T-cell (primary cell): ENCODE measurements at regions of chr11 and their contacts with region 1.

Region 1: DNA sequence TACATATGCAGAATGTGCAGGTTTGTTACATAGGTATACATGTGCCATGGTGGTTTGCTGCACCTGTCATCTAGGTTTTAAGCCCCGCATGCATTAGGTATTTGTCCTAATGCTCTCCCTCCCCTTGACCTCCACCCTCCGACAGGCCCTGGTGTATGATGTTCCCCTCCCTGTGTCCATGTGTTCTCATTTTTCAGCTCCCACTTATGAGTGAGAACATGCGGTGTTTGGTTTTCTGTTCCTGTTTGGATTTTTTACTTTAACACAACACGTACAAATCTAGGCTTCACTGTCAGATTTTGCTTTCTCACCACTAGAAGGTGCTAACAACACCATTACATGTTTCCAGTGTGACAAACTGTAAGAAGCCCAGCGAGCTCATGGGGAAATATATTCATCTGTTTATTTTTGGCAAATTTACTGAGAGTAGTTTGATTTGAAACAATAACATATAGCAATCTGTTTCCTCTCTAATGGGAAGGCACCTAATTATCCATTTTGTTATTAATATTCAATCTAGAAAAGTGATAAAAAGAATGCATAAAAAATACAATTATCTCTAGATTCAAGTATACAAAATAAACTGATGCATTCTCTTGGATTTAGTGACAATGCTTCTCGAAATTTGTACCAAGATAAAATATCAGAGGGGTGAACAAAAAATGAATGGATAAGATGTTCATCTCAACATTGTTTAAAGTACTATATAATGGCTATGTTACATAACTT is 23.2 kb upstream of the BIRC3 start:
- DNase-seq: peak in 9 of 35 experiments; percentile 11 to 82 (median 30)
- ATAC-seq: peak; percentile 86 to 97 (median 92)
- H3K4me3 ChIP-seq: peak overlapping the region in 1 of 2 donors; percentile 35
- H3K4me3 Mint-ChIP-seq: peak overlapping the region; percentile 74 to 90 (median 88)
- H3K27ac ChIP-seq: peak overlapping the region; percentile 37
- H3K27ac Mint-ChIP-seq: peak overlapping the region; percentile 96
- H3K4me1 ChIP-seq: peaks cover 7 to 11% of the 10 kb centered on the region in 2 experiments
- H3K4me1 Mint-ChIP-seq: peaks cover 32 to 53% (median 34%) of the 10 kb centered on the region in 3 donors
- H3K27me3 ChIP-seq: no peaks in the 10 kb centered on the region
- H3K27me3 Mint-ChIP-seq: no peaks in the 10 kb centered on the region

Region 2: DNA sequence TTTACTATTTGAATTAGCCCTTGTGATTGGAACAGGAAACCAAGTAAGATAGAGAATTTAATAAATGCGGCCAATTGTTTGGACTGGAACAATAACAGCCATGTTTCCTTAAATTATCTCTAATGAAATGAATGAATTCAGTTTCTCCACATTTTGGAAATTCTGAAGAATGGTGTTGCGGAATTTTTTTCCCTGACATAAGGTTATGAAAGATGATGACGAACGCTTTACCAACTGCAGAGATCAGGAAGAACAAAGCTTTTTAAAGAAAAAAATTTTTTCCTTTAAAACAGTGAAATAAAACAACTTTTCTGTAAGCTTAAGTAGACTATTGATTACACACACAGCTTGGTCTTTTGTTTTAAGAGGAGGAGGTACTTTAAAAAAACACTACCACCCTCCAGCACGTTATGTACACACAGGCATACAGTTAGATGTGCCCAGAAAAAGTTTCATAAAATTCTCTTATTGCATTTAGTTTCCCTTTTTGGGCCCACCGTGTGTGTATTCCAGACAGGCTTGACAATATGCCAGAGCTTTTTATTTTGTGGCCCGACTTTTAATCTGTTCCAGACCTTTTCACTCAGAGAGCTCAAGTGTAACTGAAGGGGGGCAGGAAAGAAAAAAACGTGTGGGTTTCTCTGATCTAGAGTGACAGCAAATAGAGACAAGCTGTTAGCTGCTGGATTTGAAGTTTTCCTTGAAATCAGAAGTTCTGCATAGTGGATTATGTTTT is 106.5 kb before region 1 on chr11:
- CTCF ChIA-PET with region 1: no interaction called
- POLR2A ChIA-PET with region 1: no interaction called
- DNase-seq: no peak
- ATAC-seq: no peak
- H3K4me3 ChIP-seq: no peak overlapping the region
- H3K4me3 Mint-ChIP-seq: no peak overlapping the region
- H3K27ac ChIP-seq: no peak overlapping the region
- H3K27ac Mint-ChIP-seq: no peak overlapping the region
- H3K4me1 ChIP-seq: no peaks in the 10 kb centered on the region
- H3K4me1 Mint-ChIP-seq: no peaks in the 10 kb centered on the region
- H3K27me3 ChIP-seq: peaks cover 0 to 3% of the 10 kb centered on the region in 2 experiments
- H3K27me3 Mint-ChIP-seq: peaks cover 10 to 26% of the 10 kb centered on the region in 2 donors

Region 3: DNA sequence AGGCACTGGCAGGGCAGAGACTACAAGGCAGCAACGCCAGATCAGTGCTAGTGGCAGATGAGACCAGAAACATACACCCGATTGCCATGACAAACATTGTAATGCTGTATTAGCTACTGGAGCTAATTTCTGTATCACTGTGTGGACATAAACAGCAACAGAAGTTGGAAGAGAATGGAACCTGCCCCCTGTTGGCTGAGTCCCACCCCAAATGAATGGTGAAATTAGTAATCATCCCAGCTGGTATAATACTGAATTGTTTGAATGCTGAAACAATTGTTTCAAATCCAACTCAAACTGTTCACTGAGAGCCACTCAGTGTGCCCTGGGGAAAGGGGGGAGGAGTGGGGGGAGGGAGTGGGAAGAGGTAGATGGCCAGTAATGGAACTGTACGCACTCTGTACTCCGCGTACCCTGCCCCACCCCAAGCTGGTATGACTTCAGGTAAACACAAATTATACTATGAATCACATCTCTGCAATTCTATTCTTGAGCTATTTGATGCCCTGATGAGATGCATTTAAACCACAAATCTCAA is 12.1 kb after region 1 on chr11:
- CTCF ChIA-PET with region 1: interaction called, 5 to 53 read pairs
- POLR2A ChIA-PET with region 1: interaction called, 4 to 7 read pairs
- DNase-seq: peak in 3 of 35 experiments; percentile 22 to 64 (median 49)
- ATAC-seq: peak; percentile 44 to 66 (median 60)
- H3K4me3 ChIP-seq: no peak overlapping the region
- H3K4me3 Mint-ChIP-seq: peak overlapping the region; percentile 37 to 60 (median 49)
- H3K27ac ChIP-seq: peak overlapping the region; percentile 90
- H3K27ac Mint-ChIP-seq: peak overlapping the region; percentile 95 to 97
- H3K4me1 ChIP-seq: peaks cover 30 to 41% of the 10 kb centered on the region in 2 experiments
- H3K4me1 Mint-ChIP-seq: peaks cover 61 to 78% (median 66%) of the 10 kb centered on the region in 3 donors
- H3K27me3 ChIP-seq: no peaks in the 10 kb centered on the region
- H3K27me3 Mint-ChIP-seq: no peaks in the 10 kb centered on the region

Region 4: DNA sequence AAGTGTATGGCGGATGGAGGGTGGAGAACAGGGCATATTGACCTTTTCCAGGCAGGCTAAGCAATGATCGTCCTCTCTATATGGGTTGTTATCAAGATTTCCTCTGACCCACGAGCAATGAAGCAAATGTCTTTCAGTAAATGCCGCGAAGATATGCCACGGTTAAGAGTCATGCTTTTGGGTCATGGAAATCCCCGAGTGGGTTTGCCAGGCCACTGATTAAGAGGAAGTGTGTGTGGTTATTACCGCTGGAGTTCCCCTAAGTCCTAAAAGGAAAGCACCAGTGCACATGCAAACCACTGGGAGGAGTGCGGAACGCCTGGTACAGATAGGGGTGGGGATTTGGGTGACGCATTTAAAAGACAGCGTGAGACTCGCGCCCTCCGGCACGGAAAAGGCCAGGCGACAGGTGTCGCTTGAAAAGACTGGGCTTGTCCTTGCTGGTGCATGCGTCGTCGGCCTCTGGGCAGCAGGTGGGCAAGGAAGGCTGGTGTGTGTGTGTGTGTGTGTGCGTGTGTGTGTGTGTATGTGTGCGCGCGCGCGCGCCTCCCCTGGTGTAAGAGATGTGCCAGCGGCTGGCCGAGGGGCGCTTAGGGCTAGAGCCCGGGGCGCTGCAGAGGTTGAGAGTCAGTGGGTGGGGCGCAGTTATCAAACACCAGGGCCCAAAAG is 23.2 kb after region 1 on chr11 and contains the start of gene BIRC3:
- CTCF ChIA-PET with region 1: interaction called, 26 to 66 read pairs
- POLR2A ChIA-PET with region 1: interaction called, 5 to 11 read pairs
- DNase-seq: peak; percentile 70 to 98 (median 92)
- ATAC-seq: peak; percentile 87 to 91 (median 90)
- H3K4me3 ChIP-seq: peak within 1 kb of the TSS; percentile 63 to 75
- H3K4me3 Mint-ChIP-seq: peak within 1 kb of the TSS; percentile 89 to 95 (median 93)
- H3K27ac ChIP-seq: peak within 1 kb of the TSS; percentile 95
- H3K27ac Mint-ChIP-seq: peak within 1 kb of the TSS; percentile 97 to 98
- H3K4me1 ChIP-seq: peaks cover 21 to 49% of the 10 kb centered on the region in 2 experiments
- H3K4me1 Mint-ChIP-seq: peaks cover 66 to 87% (median 77%) of the 10 kb centered on the region in 3 donors
- H3K27me3 ChIP-seq: no peaks in the 10 kb centered on the region
- H3K27me3 Mint-ChIP-seq: no peaks in the 10 kb centered on the region
- total RNA-seq, gene BIRC3: 82.6 to 114 (median 96.0) TPM

Region 5: GRCh38 chr11:102323542-102324251 is 29.7 kb after region 1 on chr11:
- CTCF ChIA-PET with region 1: interaction called, 26 to 66 read pairs
- POLR2A ChIA-PET with region 1: interaction called, 4 to 11 read pairs
- DNase-seq: no peak
- ATAC-seq: no peak
- H3K4me3 ChIP-seq: no peak overlapping the region
- H3K4me3 Mint-ChIP-seq: no peak overlapping the region
- H3K27ac ChIP-seq: peak overlapping the region; percentile 54
- H3K27ac Mint-ChIP-seq: peak overlapping the region; percentile 52 to 57
- H3K4me1 ChIP-seq: peaks cover 20 to 32% of the 10 kb centered on the region in 2 experiments
- H3K4me1 Mint-ChIP-seq: peaks cover 53 to 71% (median 61%) of the 10 kb centered on the region in 3 donors
- H3K27me3 ChIP-seq: no peaks in the 10 kb centered on the region
- H3K27me3 Mint-ChIP-seq: no peaks in the 10 kb centered on the region

Region 6: GRCh38 chr11:102332611-102332994 is 38.6 kb after region 1 on chr11:
- CTCF ChIA-PET with region 1: interaction called, 3 to 12 read pairs
- POLR2A ChIA-PET with region 1: no interaction called
- DNase-seq: no peak
- ATAC-seq: no peak
- H3K4me3 ChIP-seq: no peak overlapping the region
- H3K4me3 Mint-ChIP-seq: no peak overlapping the region
- H3K27ac ChIP-seq: peak overlapping the region; percentile 23
- H3K27ac Mint-ChIP-seq: peak overlapping the region; percentile 9 to 67
- H3K4me1 ChIP-seq: no peaks in the 10 kb centered on the region
- H3K4me1 Mint-ChIP-seq: peaks cover 25 to 33% (median 30%) of the 10 kb centered on the region in 3 donors
- H3K27me3 ChIP-seq: no peaks in the 10 kb centered on the region
- H3K27me3 Mint-ChIP-seq: no peaks in the 10 kb centered on the region

Region 7: DNA sequence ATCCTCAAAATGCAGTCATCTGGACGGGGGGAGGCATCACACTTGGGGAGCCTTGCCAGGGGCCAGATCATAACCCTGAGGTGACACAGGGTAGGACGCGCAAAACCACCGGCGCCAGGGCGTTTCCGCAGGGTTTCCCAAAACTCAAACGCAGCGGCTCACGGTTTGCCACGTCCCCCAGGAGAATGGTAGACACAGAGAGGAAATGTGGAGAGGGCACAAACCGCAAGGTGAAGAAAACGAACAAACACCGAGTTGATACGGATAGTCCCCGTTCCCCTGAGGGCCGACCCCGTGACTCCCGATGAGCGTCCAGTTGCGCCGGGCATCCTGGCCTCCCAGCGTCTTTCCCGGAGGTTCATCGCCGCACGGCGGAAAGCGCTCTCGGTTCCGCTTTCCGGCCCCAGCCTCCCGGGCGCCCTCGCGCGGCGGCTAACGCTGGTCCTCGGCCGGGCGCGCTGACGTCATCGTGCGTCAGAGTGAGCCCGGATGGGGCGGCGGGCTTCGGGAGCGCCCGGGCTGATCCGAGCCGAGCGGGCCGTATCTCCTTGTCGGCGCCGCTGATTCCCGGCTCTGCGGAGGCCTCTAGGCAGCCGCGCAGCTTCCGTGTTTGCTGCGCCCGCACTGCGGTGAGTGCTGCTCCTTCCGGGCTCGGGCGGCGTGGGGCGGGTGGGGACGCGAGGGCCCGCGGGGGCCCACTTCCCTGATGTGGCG is 52.9 kb after region 1 on chr11 and contains the start of gene BIRC2:
- CTCF ChIA-PET with region 1: interaction called, 15 to 23 read pairs
- POLR2A ChIA-PET with region 1: interaction called in 1 of 2 experiments, 4 read pairs
- DNase-seq: peak; percentile 88 to 98 (median 94)
- ATAC-seq: peak; percentile 85 to 92 (median 90)
- H3K4me3 ChIP-seq: peak within 1 kb of the TSS; percentile 98 to 99
- H3K4me3 Mint-ChIP-seq: peak within 1 kb of the TSS; percentile 92 to 98 (median 98)
- H3K27ac ChIP-seq: peak within 1 kb of the TSS; percentile 99
- H3K27ac Mint-ChIP-seq: peak within 1 kb of the TSS; percentile 99
- H3K4me1 ChIP-seq: peaks cover 6 to 17% of the 10 kb centered on the region in 2 experiments
- H3K4me1 Mint-ChIP-seq: peaks cover 40 to 50% (median 50%) of the 10 kb centered on the region in 3 donors
- H3K27me3 ChIP-seq: no peaks in the 10 kb centered on the region
- H3K27me3 Mint-ChIP-seq: no peaks in the 10 kb centered on the region
- total RNA-seq, gene BIRC2: 53.3 to 100 (median 60.8) TPM

Region 8: GRCh38 chr11:102666331-102666957 is 372.4 kb after region 1 on chr11:
- CTCF ChIA-PET with region 1: interaction called in 1 of 2 experiments, 11 read pairs
- POLR2A ChIA-PET with region 1: no interaction called
- DNase-seq: peak in 6 of 35 experiments; percentile 1 to 53 (median 10)
- ATAC-seq: peak in 2 of 4 experiments; percentile 42 to 46
- H3K4me3 ChIP-seq: no peak overlapping the region
- H3K4me3 Mint-ChIP-seq: no peak overlapping the region
- H3K27ac ChIP-seq: no peak overlapping the region
- H3K27ac Mint-ChIP-seq: no peak overlapping the region
- H3K4me1 ChIP-seq: peaks cover 0 to 4% of the 10 kb centered on the region in 2 experiments
- H3K4me1 Mint-ChIP-seq: peaks cover 0 to 5% (median 1%) of the 10 kb centered on the region in 3 donors
- H3K27me3 ChIP-seq: no peaks in the 10 kb centered on the region
- H3K27me3 Mint-ChIP-seq: peaks cover 5 to 7% of the 10 kb centered on the region in 2 donors